ENCODE measurements at regions of chr2 and their contacts with region 1.

Region 1: DNA sequence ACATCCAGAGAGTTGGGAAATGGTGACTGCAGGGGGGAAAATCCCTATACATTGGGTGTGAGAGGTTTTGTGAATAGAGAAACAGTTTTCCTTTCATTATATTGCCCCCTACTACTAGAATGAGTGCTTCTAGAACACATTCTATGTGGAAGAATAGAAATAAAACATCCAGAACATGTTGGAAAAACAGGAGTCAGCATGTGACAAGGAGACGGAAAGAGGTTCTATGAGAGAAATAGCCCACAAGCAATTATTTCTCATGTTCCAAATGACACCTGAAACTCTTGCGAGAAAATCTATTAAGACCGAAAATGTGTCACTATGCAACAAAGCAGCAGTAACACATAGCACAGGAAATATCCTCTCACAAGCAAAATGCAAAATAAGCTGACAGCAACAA is 202.7 kb upstream of the SPOPL start:
- DNase-seq: no peak
- ATAC-seq: no peak

Region 2: GRCh38 chr2:138355244-138355643 is 56.3 kb after region 1 on chr2:
- intact Hi-C with region 1: loop called (anchors 2 kb)
- DNase-seq: no peak
- ATAC-seq: no peak